Natural killer cell (primary cell): ENCODE measurements at regions of chr4 and their contacts with region 1.

Region 1: GRCh38 chr4:109559983-109560686 is at the start of gene MCUB:
- DNase-seq: peak; percentile 68 to 96
- ATAC-seq: peak; percentile 78 to 87 (median 82)
- H3K4me3 ChIP-seq: peak within 1 kb of the TSS; percentile 78
- H3K4me3 Mint-ChIP-seq: peak within 1 kb of the TSS; percentile 82
- H3K27ac ChIP-seq: peak within 1 kb of the TSS; percentile 82
- H3K27ac Mint-ChIP-seq: peak within 1 kb of the TSS; percentile 68 to 88
- H3K4me1 ChIP-seq: peaks cover 13% of the 10 kb centered on the region
- H3K4me1 Mint-ChIP-seq: peaks cover 16 to 39% of the 10 kb centered on the region in 2 donors
- H3K27me3 ChIP-seq: no peaks in the 10 kb centered on the region
- H3K27me3 Mint-ChIP-seq: no peaks in the 10 kb centered on the region
- CTCF ChIP-seq: no peak
- total RNA-seq, gene MCUB: 25.1 to 35.8 (median 31.1) TPM

Region 2: DNA sequence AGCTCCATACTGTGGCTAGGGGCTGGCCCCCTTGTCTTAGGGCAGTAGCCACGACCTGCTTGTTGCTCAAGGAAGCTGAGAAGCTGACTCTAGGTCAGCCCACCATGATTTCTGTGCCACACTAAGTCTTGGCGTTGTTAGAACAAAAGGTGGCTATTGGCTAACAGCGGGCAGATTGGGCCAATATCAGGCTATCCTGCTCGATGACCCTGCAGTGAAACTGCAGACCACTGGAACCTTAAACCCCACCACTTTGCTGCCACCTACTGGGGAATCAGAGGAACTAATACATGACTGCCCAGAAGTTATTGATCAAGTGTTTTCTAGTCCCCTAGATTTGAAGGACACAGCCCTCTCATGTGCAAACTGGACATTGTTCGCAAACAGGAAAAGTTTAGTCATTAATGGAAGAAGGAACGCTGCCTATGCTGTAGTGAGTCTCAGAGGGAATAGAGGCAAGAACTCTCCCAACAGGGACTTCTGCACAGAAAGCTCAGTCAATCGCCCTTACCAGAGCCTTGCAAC is 1823.1 kb before region 1 on chr4:
- intact Hi-C with region 1: no loop called
- DNase-seq: peak; percentile 21 to 76
- ATAC-seq: peak; percentile 57 to 77 (median 76)
- H3K4me3 ChIP-seq: no peak overlapping the region
- H3K4me3 Mint-ChIP-seq: no peak overlapping the region
- H3K27ac ChIP-seq: no peak overlapping the region
- H3K27ac Mint-ChIP-seq: no peak overlapping the region
- H3K4me1 ChIP-seq: no peaks in the 10 kb centered on the region
- H3K4me1 Mint-ChIP-seq: no peaks in the 10 kb centered on the region
- H3K27me3 ChIP-seq: no peaks in the 10 kb centered on the region
- H3K27me3 Mint-ChIP-seq: peaks cover 6 to 10% of the 10 kb centered on the region in 2 donors
- CTCF ChIP-seq: peak; percentile 80

Region 3: GRCh38 chr4:109631532-109632108 is 71.5 kb after region 1 on chr4:
- intact Hi-C with region 1: no loop called
- DNase-seq: no peak
- ATAC-seq: peak in 2 of 3 donors; percentile 24 to 32
- H3K4me3 ChIP-seq: no peak overlapping the region
- H3K4me3 Mint-ChIP-seq: no peak overlapping the region
- H3K27ac ChIP-seq: no peak overlapping the region
- H3K27ac Mint-ChIP-seq: peak overlapping the region; percentile 15 to 44
- H3K4me1 ChIP-seq: peaks cover 6% of the 10 kb centered on the region
- H3K4me1 Mint-ChIP-seq: peaks cover 22 to 25% of the 10 kb centered on the region in 2 donors
- H3K27me3 ChIP-seq: no peaks in the 10 kb centered on the region
- H3K27me3 Mint-ChIP-seq: no peaks in the 10 kb centered on the region
- CTCF ChIP-seq: no peak

Region 4: DNA sequence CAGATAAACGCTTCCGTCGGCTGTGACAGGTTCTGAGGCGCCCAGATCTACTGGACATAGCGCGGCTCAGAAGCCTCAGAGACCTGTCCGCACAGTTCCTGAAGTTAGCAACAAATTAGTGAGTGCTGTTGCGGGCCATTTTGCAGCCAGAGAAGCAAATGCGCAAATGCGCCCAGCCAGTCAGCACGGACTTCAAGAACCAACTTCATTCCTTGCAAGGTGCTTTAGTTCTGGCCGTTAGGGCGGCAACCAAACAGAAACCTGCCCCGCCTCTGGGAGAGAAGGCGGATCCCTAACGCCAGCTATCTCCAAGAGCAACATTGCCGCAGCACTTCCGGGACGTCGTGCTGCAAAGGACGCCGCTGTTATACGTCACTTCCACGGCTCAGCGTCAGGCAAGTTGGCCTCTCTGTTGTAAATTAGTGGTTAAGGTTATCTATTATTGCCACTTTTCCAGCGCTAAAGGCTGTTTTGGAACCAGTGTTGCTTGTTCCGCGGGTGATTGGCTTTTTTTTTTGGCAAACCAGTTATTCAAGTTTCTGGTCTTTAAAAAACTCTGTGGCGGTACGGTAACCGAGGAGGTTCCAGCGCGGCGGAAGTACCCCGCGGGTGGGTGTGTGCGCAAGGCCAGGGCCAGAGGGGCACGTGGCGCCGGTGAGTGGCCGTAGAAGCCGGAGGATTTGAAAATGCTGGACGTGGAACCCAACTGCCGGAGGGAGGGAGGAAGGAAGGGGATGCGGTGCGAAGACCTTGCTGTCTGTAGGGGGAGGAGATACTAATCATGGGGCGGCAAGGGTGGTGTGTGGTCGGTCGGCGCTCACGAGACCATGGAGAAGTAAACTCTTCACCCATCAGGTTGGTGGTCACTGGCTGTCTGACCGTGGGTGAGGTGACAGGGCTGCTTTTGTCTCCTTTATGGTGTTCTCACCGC is 255.3 kb after region 1 on chr4 and contains the start of gene GAR1:
- intact Hi-C with region 1: loop called (anchors 5 kb)
- DNase-seq: peak; percentile 70 to 95
- ATAC-seq: peak; percentile 83 to 91 (median 84)
- H3K4me3 ChIP-seq: peak within 1 kb of the TSS; percentile 82
- H3K4me3 Mint-ChIP-seq: peak within 1 kb of the TSS; percentile 93
- H3K27ac ChIP-seq: peak within 1 kb of the TSS; percentile 78
- H3K27ac Mint-ChIP-seq: peak within 1 kb of the TSS; percentile 90 to 94
- H3K4me1 ChIP-seq: peaks cover 19% of the 10 kb centered on the region
- H3K4me1 Mint-ChIP-seq: peaks cover 36 to 40% of the 10 kb centered on the region in 2 donors
- H3K27me3 ChIP-seq: no peaks in the 10 kb centered on the region
- H3K27me3 Mint-ChIP-seq: peaks cover 9 to 10% of the 10 kb centered on the region in 2 donors
- CTCF ChIP-seq: no peak
- total RNA-seq, gene GAR1: 9.5 to 11.2 (median 9.7) TPM